Transverse colon (tissue), 4 donors: ENCODE measurements at regions of chr2 and their contacts with region 1.

Region 1: DNA sequence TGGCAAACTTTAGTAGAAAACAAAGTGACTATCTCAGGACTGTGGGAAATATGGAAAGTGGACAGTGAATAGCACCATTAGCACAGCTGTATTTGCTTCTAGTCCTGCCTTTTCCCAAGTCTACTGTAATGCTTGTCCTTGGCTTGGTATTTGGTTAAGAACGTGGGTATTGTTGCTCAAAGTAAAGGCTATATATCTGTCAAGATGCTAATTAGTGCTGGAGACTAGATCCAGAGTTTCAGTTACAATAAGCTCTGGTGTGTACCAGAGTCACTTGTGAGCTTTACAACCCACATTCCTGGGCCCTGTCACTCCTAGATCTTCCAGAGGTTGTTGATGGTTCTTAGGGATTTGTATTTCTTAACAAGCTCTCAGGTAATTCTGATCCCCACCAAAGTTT is 313.6 kb downstream of the SLC8A1 start:
- DNase-seq: no peak
- H3K4me3 ChIP-seq: no peak overlapping the region
- H3K27ac ChIP-seq: no peak overlapping the region
- H3K4me1 ChIP-seq: no peaks in the 10 kb centered on the region
- H3K27me3 ChIP-seq: no peaks in the 10 kb centered on the region
- CTCF ChIP-seq: no peak
- EP300 ChIP-seq: no peak
- POLR2A ChIP-seq: no peak

Region 2: GRCh38 chr2:38619458-38620164 is 1518.7 kb before region 1 on chr2:
- in situ Hi-C with region 1: no loop called
- intact Hi-C with region 1: no loop called
- DNase-seq: no peak
- H3K4me3 ChIP-seq: no peak overlapping the region
- H3K27ac ChIP-seq: peak overlapping the region in 2 of 4 donors; percentile 0 to 19
- H3K4me1 ChIP-seq: peaks cover 0 to 15% (median 6%) of the 10 kb centered on the region in 4 donors
- H3K27me3 ChIP-seq: no peaks in the 10 kb centered on the region
- CTCF ChIP-seq: no peak
- EP300 ChIP-seq: no peak
- POLR2A ChIP-seq: no peak

Region 3: DNA sequence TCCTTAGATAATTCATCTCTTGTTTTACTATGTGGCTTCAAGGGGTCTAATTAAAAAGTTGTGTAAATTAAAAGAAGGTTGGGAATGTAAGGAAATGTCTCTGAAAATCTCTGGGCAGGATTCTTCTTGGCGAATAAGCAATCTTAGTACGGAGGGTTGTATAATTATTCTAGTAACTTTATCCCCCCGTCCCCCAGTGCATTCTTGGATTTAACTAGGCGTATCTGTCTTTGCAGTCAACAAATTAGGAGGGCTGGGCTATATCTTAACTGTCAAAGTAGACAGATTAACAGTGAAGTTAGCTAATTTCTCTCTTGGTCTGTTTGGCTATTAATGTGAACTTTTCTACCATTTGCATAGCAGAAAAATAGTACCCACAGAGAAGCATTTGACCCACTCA is 29.5 kb before region 1 on chr2:
- in situ Hi-C with region 1: no loop called
- intact Hi-C with region 1: loop called (anchors 1 kb)
- DNase-seq: no peak
- H3K4me3 ChIP-seq: no peak overlapping the region
- H3K27ac ChIP-seq: no peak overlapping the region
- H3K4me1 ChIP-seq: peaks cover 0 to 3% (median 0%) of the 10 kb centered on the region in 4 donors
- H3K27me3 ChIP-seq: no peaks in the 10 kb centered on the region
- CTCF ChIP-seq: no peak
- EP300 ChIP-seq: no peak
- POLR2A ChIP-seq: no peak